ENCODE measurements at regions of chr11 and their contacts with region 1.

Region 1: DNA sequence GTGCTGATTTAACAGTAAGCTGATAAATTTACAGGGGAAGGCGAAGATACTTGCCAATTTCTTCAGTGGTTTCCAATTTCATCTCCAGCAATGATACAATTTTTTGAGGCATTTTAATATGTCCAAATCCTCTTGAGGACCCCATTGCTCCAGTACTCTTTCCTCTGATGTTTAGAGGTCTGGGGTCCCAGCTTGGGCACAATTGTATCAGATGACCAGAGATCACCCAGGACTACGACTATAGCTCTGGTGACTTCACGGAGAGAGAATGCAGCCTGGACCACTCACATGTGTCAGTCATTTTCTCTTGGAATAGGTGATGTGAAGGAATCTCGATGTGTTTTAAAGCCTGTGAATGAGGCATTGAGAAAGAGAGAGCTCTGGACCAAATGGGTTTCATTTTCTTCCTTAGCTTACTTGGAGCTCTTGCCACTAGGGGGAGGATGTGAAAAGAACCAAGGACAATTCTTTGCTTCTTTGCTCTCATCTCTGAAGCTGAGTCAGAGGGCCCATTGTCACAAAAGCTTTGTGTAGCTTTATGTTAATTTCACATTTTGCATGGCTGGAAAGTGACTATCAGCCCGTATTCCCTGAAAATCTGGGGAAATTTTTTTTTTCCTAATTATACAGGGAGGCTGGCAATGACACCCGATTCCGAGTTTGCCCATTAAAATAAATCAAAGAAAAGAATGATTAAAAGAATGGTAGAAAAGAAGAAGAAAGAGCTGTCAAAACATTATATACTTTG is 6.7 kb upstream of the CCDC90B start:
- DNase-seq: peak; percentile 37
- H3K4me3 Mint-ChIP-seq: peak overlapping the region; percentile 35
- H3K27ac Mint-ChIP-seq: no peak overlapping the region
- H3K4me1 Mint-ChIP-seq: peaks cover 3% of the 10 kb centered on the region
- H3K27me3 Mint-ChIP-seq: peaks cover 7% of the 10 kb centered on the region

Region 2: GRCh38 chr11:83282084-83282716 is 10.7 kb before region 1 on chr11:
- CTCF ChIA-PET with region 1: interaction called, 10 read pairs
- DNase-seq: no peak
- H3K4me3 Mint-ChIP-seq: no peak overlapping the region
- H3K27ac Mint-ChIP-seq: no peak overlapping the region
- H3K4me1 Mint-ChIP-seq: peaks cover 41% of the 10 kb centered on the region
- H3K27me3 Mint-ChIP-seq: no peaks in the 10 kb centered on the region

Region 3: GRCh38 chr11:83724008-83724461 is 431.2 kb after region 1 on chr11:
- CTCF ChIA-PET with region 1: interaction called, 17 read pairs
- DNase-seq: peak; percentile 23
- H3K4me3 Mint-ChIP-seq: peak overlapping the region; percentile 9
- H3K27ac Mint-ChIP-seq: no peak overlapping the region
- H3K4me1 Mint-ChIP-seq: no peaks in the 10 kb centered on the region
- H3K27me3 Mint-ChIP-seq: peaks cover 14% of the 10 kb centered on the region

Region 4: DNA sequence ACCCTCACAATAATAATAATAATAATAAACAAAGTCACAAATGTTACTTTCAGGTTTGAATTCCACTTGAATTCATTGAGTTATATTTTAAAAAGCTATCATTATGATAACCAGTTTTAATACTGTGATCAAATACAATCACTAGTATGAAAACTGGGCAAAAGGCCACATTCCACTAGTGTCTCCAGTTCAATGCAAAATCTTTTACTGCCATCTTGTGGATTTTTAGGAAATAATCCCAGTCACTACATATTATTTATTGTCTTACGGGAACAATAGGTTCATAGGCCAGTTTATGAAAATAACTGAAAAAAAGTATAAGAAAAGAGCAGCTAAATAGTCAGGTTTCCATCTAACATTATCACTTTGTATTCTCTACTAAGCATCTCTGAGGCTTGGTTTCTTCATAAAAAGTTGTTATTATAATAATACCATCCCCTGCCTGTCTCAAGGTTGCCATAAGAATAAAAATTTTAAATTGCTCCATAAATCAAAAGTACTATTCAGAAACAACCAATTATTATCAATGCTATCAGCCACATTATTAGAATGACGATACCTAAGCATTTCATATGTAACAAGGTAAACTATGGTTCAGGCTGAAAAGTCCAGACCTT is 527.2 kb after region 1 on chr11:
- CTCF ChIA-PET with region 1: interaction called, 20 read pairs
- DNase-seq: no peak
- H3K4me3 Mint-ChIP-seq: no peak overlapping the region
- H3K27ac Mint-ChIP-seq: no peak overlapping the region
- H3K4me1 Mint-ChIP-seq: no peaks in the 10 kb centered on the region
- H3K27me3 Mint-ChIP-seq: no peaks in the 10 kb centered on the region

Measured in activated naive CD4-positive, alpha-beta T cell treated with anti-CD3 and anti-CD28 coated beads, Interleukin-2, amount 10 ng/mL, durations not matched to agents 7 days and 5 days (primary cell).